Activated T-helper 1 cell treated with anti-CD3 and anti-CD28 coated beads, Interleukin-12 subunit alpha, Interleukin-12 subunit beta, Interleukin-2, Interleukin-4 antibody, amounts not matched to agents 30 ng/mL and 10 ng/mL and 1 ng/mL, durations not matched to agents 14 hours and 24 hours and 36 hours (primary cell): ENCODE measurements at regions of chr1 and their contacts with region 1.

Region 1: GRCh38 chr1:160607011-160607671 is 27.8 kb upstream of the CD84 start:
- DNase-seq: peak; percentile 59
- H3K4me3 Mint-ChIP-seq: peak overlapping the region; percentile 48
- H3K27ac Mint-ChIP-seq: peak overlapping the region; percentile 75
- H3K4me1 Mint-ChIP-seq: peaks cover 64% of the 10 kb centered on the region
- H3K27me3 Mint-ChIP-seq: no peaks in the 10 kb centered on the region

Region 2: GRCh38 chr1:160342953-160343869 is 263.9 kb before region 1 on chr1 and contains the starts of genes COPA and NCSTN:
- intact Hi-C with region 1: loop called (anchors 1 kb)
- DNase-seq: peak; percentile 88
- H3K4me3 Mint-ChIP-seq: peak within 1 kb of the TSS; percentile 100
- H3K27ac Mint-ChIP-seq: peak within 1 kb of the TSS; percentile 99
- H3K4me1 Mint-ChIP-seq: peaks cover 61% of the 10 kb centered on the region
- H3K27me3 Mint-ChIP-seq: no peaks in the 10 kb centered on the region
- total RNA-seq, gene COPA: 123 and 126 TPM in 2 replicates
- total RNA-seq, gene NCSTN: 74.8 and 81.6 TPM in 2 replicates

Region 3: GRCh38 chr1:160428655-160429054 is 178.5 kb before region 1 on chr1:
- intact Hi-C with region 1: loop called (anchors 1 kb)
- DNase-seq: peak; percentile 15
- H3K4me3 Mint-ChIP-seq: no peak overlapping the region
- H3K27ac Mint-ChIP-seq: peak overlapping the region; percentile 91
- H3K4me1 Mint-ChIP-seq: peaks cover 59% of the 10 kb centered on the region
- H3K27me3 Mint-ChIP-seq: no peaks in the 10 kb centered on the region

Region 4: GRCh38 chr1:160539990-160540858 is 66.9 kb before region 1 on chr1:
- intact Hi-C with region 1: loop called (anchors 1 kb)
- DNase-seq: peak; percentile 64
- H3K4me3 Mint-ChIP-seq: peak overlapping the region; percentile 38
- H3K27ac Mint-ChIP-seq: peak overlapping the region; percentile 90
- H3K4me1 Mint-ChIP-seq: peaks cover 46% of the 10 kb centered on the region
- H3K27me3 Mint-ChIP-seq: no peaks in the 10 kb centered on the region

Region 5: DNA sequence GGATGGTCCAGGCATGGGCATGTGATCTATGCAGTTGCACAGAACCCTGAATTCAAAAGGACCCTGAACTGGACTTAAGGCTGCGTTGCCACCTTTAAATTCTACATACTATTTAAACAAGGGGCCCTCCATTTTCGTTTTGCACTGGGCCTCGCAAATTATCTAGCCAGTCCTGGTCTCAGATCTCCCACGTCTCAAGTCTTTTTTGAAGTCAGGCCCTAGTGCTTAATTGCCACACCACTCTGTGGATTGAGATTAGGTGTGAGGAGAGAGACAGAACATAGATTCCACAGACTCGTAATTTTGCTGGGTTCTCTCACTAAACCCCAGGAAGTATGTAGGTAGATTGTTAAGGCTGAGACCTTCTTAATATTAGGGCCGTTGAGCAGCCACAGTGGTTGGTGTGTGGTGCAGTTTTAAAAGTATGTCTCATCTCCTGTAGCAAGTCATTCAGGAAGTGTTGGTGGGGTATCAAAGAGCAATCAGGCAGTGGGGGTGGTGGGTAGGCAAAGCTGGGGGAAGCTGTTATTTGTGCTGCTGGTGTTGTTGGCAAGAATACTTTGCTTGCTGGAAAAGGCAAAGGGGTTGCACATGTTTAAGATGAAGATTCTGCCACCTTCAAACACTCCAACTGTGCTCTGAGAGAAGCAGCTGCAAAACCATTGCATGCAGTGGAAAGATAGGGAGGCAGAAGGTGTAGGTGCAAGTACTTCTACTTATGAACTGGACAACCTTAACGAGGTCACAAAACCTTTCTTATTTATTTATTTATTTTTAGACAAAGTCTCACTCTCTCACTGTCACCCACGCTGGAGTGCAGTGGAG is 39.1 kb before region 1 on chr1:
- intact Hi-C with region 1: loop called (anchors 1 kb)
- DNase-seq: peak; percentile 50
- H3K4me3 Mint-ChIP-seq: peak overlapping the region; percentile 60
- H3K27ac Mint-ChIP-seq: peak overlapping the region; percentile 95
- H3K4me1 Mint-ChIP-seq: peaks cover 83% of the 10 kb centered on the region
- H3K27me3 Mint-ChIP-seq: no peaks in the 10 kb centered on the region